Activated CD8-positive, alpha-beta T cell treated with anti-CD3 and anti-CD28 coated beads for 36 hours (primary cell): ENCODE measurements at regions of chr9 and their contacts with region 1.

Region 1: GRCh38 chr9:136482793-136483588 is at the start of gene SEC16A:
- DNase-seq: peak; percentile 100
- ATAC-seq: peak; percentile 81
- H3K4me3 Mint-ChIP-seq: peak within 1 kb of the TSS; percentile 87
- H3K27ac Mint-ChIP-seq: peak within 1 kb of the TSS; percentile 98
- H3K4me1 Mint-ChIP-seq: peaks cover 31% of the 10 kb centered on the region
- H3K27me3 Mint-ChIP-seq: peaks cover 1% of the 10 kb centered on the region
- CTCF ChIP-seq: no peak
- total RNA-seq, gene SEC16A: 67.9 to 69.8 TPM

Region 2: DNA sequence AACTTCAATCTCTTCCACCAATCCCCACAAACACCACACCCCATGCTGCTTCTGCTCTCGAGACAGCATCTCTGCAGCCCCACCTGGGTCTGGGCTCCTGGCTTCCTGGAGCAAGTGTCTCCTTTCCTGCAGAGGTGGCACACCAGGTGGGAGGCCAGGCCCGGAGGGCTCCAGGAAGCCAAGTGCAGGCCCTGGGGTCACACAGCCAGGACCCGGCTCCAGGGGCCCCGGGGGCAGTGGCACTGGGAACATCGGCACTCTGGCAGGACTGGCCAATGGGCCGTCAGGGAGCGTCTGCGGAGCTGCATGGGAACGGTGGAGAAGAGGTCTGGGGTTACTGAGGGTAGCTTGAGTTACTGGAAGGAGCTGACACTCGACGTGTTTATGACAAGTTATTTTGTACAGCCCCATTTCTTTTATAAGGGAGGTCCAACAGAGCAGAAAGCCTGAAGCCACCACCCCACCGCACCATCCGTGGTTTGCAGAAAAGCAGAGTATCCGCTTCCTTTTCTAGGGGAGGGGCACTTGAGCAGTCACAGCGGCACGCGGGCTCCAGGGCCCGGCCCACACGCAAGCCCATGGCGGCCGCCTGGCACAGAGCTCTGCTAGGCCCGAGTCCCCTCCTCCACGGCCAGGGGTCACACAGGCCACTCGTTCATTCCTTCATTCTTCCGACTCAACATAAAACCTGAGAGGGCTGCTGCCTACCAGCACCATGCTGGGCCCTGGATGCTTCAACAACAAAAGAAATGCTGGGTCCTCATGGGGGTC is 28.8 kb before region 1 on chr9:
- CTCF ChIA-PET with region 1: no interaction called
- POLR2A ChIA-PET with region 1: no interaction called
- intact Hi-C with region 1: no loop called
- DNase-seq: no peak
- ATAC-seq: no peak
- H3K4me3 Mint-ChIP-seq: no peak overlapping the region
- H3K27ac Mint-ChIP-seq: no peak overlapping the region
- H3K4me1 Mint-ChIP-seq: no peaks in the 10 kb centered on the region
- H3K27me3 Mint-ChIP-seq: no peaks in the 10 kb centered on the region
- CTCF ChIP-seq: no peak

Region 3: DNA sequence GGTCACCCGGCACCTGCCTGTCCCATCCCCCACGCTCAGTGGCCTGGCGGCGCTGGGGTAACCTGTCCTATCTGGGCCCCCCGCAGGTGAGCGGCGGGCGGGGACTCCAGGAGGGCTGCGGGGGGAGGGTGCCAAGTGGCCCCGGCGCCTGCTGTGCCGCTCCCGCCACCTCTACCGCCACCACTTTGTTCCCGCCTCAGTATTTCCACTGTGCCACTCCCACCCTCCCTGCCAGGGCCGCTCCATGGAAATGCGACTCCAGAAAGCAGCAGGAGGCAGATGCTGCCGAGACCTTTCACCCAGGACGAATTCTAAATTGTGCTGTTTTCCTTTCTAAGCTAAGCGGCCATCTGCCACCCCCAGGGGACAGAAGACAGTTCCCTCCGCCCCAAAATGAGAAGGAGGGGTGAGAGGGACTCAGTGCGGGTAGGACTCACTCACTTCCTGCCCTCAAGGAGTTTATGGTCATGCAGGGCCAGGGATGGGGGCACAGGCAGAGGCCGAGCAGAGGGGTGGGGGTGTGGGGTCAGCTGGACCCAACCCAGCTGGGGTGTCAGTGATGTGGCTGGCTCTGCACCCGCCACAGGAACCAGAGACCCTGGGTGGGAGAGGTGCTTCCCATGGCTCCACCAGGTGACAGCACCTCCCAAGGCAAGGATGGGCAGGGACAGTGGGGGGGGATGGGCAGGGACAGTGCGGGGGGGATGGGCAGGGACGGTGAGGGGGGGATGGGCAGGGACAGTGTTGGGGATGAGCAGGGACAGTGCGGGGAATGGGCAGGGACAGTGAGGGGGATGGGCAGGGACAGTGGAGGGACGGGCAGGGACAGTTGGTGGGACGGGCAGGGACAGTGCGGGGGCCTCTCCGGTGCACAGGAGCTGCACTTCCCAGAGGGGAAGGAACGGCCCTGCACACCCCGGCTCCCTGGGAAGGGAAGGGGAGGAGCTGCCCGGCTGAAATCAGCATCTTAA is 45.0 kb after region 1 on chr9:
- CTCF ChIA-PET with region 1: interaction called, 10 read pairs
- POLR2A ChIA-PET with region 1: interaction called, 5 read pairs
- intact Hi-C with region 1: loop called (anchors 10 kb)
- DNase-seq: no peak
- ATAC-seq: peak; percentile 22
- H3K4me3 Mint-ChIP-seq: no peak overlapping the region
- H3K27ac Mint-ChIP-seq: peak overlapping the region; percentile 30
- H3K4me1 Mint-ChIP-seq: peaks cover 25% of the 10 kb centered on the region
- H3K27me3 Mint-ChIP-seq: no peaks in the 10 kb centered on the region
- CTCF ChIP-seq: no peak

Region 4: DNA sequence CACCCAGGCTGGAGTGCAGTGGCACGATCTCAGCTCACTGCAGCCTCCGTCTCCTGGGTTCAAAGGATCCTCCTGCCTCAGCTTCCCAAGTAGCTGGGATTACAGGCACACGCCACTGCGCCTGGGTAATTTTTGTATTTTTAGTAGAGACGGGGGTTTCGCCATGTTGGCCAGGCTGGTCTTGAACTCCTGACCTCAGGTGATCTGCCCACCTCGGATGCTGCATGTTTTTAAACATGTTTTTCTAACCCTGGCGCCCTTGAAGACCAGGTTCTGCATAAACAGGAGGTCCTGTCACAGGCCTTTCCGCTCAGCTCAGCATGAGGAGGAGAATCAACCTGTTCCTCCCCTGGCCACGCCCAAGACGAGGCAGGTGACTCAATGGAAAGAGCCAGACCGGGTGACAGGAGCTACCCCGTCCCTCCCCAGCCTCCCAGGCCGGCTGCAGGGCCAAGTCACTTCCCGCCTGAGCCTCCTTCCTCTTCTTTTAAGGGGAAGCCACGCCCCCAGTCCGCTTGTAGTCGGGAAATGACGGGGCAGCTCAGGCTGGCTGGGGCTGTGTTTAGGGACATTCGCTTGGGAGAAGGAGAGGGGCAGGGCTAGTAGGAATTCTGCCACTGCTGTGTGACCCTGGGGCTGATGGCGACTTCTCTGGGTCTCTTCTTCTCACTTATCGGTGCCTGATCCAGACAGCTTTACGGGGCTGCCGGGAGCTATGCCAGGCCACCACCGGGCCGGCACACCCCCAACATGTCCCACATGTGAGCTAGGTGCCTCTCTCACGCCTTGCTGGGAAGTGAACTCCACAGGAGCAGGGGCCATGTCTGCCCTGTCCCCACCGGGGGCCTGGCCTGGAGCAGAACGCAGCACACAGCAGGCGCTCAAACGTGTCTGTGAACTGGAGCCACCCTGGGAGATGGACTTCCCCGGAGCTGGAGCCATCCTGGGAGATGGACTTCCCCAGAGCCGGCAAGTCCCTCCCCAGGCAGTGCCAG is 56.7 kb after region 1 on chr9:
- CTCF ChIA-PET with region 1: interaction called, 36 read pairs
- POLR2A ChIA-PET with region 1: interaction called, 3 read pairs
- intact Hi-C with region 1: loop called (anchors 10 kb)
- DNase-seq: peak; percentile 98
- ATAC-seq: peak; percentile 85
- H3K4me3 Mint-ChIP-seq: peak overlapping the region; percentile 72
- H3K27ac Mint-ChIP-seq: peak overlapping the region; percentile 99
- H3K4me1 Mint-ChIP-seq: peaks cover 61% of the 10 kb centered on the region
- H3K27me3 Mint-ChIP-seq: no peaks in the 10 kb centered on the region
- CTCF ChIP-seq: no peak

Region 5: GRCh38 chr9:136631038-136632000 is 148.3 kb after region 1 on chr9:
- CTCF ChIA-PET with region 1: interaction called, 93 read pairs
- POLR2A ChIA-PET with region 1: interaction called, 6 read pairs
- intact Hi-C with region 1: loop called (anchors 2 kb)
- DNase-seq: peak; percentile 84
- ATAC-seq: peak; percentile 88
- H3K4me3 Mint-ChIP-seq: no peak overlapping the region
- H3K27ac Mint-ChIP-seq: no peak overlapping the region
- H3K4me1 Mint-ChIP-seq: peaks cover 1% of the 10 kb centered on the region
- H3K27me3 Mint-ChIP-seq: peaks cover 7% of the 10 kb centered on the region
- CTCF ChIP-seq: peak; percentile 70

Region 6: GRCh38 chr9:136644598-136645351 is 161.8 kb after region 1 on chr9:
- CTCF ChIA-PET with region 1: interaction called, 16 read pairs
- POLR2A ChIA-PET with region 1: no interaction called
- intact Hi-C with region 1: no loop called
- DNase-seq: peak; percentile 84
- ATAC-seq: peak; percentile 99
- H3K4me3 Mint-ChIP-seq: no peak overlapping the region
- H3K27ac Mint-ChIP-seq: no peak overlapping the region
- H3K4me1 Mint-ChIP-seq: no peaks in the 10 kb centered on the region
- H3K27me3 Mint-ChIP-seq: peaks cover 19% of the 10 kb centered on the region
- CTCF ChIP-seq: peak; percentile 97